PC-3 (cell line): ENCODE measurements at regions of chr18 and their contacts with region 1.

Region 1: DNA sequence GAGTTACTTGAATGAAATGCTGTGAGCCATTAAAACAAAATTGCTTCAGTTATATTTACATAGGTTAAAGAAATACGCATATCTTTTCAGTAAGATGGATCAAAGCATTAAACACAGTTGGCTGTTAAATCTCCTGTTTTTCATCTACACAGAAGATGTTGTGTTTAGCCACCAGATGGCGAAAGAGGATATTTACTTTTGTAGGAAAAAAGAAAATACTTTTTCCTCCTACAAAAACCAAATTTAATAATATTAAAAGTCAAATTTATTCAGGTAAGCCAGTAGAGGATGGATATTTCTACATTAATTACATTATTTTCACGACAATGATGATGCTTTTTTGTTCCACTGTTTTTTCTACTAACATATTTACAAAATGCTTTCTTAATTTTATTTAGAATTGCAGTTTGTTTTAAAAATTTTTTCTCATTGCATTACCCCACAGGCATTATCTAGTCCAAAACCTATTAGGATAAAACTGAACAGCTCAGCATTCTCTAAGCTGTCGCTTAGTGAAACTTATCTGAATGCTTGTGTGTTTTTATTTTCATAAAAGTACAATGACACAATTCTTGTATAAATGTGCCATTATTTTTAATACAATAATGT is 173.7 kb downstream of the ASXL3 start:
- DNase-seq: peak; percentile 9
- ATAC-seq: no peak
- H3K4me3 ChIP-seq: no peak overlapping the region
- H3K27ac ChIP-seq: no peak overlapping the region
- H3K4me1 ChIP-seq: 0 out of 2 replicates have a peak, but pooled peaks cover 4% of the 10 kb centered on the region
- H3K27me3 ChIP-seq: no peaks in the 10 kb centered on the region
- CTCF ChIP-seq: peak; percentile 48; the same call in 1 of the 2 replicates

Region 2: GRCh38 chr18:33596178-33596854 is 155.4 kb before region 1 on chr18:
- CTCF ChIA-PET with region 1: no interaction called
- POLR2A ChIA-PET with region 1: no interaction called
- intact Hi-C with region 1: loop called (anchors 1 kb)
- DNase-seq: peak; percentile 69
- ATAC-seq: peak; percentile 90
- H3K4me3 ChIP-seq: no peak overlapping the region
- H3K27ac ChIP-seq: peak overlapping the region; percentile 76
- H3K4me1 ChIP-seq: peaks cover 12% of the 10 kb centered on the region
- H3K27me3 ChIP-seq: no peaks in the 10 kb centered on the region
- CTCF ChIP-seq: no peak

Region 3: GRCh38 chr18:33781429-33781828 is 29.7 kb after region 1 on chr18:
- CTCF ChIA-PET with region 1: interaction called, 12 read pairs
- POLR2A ChIA-PET with region 1: no interaction called
- intact Hi-C with region 1: no loop called
- DNase-seq: no peak
- ATAC-seq: no peak
- H3K4me3 ChIP-seq: no peak overlapping the region
- H3K27ac ChIP-seq: no peak overlapping the region
- H3K4me1 ChIP-seq: no peaks in the 10 kb centered on the region
- H3K27me3 ChIP-seq: no peaks in the 10 kb centered on the region
- CTCF ChIP-seq: no peak